PC-9 (cell line): ENCODE measurements at regions of chr2 and their contacts with region 1.

Region 1: DNA sequence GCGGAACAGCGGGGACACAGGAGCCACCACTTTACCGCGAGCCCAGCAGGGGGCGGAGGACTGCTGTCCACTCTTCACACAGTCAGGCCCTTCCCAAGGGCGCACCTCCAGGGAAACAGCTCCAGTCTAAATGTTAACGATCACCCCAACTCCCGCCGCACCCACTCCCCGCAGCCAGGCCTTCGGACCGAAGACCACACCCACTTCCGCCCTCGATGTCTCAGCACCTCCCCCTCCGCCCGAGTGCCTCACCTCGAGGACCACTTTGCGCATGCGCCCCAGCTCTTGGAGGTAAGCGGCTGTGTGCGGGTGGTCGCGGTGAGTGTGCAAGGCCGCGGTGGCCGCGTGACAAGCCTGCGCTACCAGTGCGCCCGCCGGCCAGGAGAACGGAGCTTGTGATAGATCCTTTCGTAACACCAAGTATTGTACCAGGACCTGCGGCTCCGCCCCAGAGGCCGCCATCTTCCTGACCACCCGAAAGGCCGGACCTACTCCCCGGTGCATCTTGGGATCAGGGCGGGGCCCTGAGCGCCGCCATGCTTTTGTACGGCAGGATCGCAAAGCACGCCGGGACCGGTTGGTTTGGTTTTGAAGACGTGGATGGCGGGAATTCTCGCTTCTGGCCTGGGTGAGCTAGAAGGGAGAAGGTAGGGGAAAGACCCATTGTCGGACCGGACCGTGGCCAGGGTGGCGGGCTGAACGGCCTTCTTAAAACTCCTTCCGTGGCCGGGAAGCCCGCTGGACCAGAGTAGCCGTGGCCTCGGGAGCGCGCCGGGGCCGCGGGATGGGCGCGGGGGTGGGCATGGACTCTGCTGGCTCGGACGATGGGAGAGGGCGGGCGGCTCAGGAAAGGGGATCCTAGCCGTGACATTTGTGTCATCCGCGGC is at the starts of genes CENPO and PTRHD1:
- DNase-seq: peak; percentile 93 to 96
- H3K4me3 ChIP-seq: peak within 1 kb of the TSS; percentile 71
- H3K27ac ChIP-seq: peak within 1 kb of the TSS; percentile 89
- H3K4me1 ChIP-seq: peaks cover 31% of the 10 kb centered on the region
- H3K27me3 ChIP-seq: no peaks in the 10 kb centered on the region
- CTCF ChIP-seq: peak; percentile 82
- total RNA-seq, gene CENPO: 21.3 and 33.0 TPM in 2 replicates
- total RNA-seq, gene PTRHD1: 23.6 and 28.7 TPM in 2 replicates

Region 2: GRCh38 chr2:24490674-24491625 is 302.2 kb before region 1 on chr2 and contains the start of gene NCOA1:
- CTCF ChIA-PET with region 1: no interaction called
- POLR2A ChIA-PET with region 1: no interaction called
- intact Hi-C with region 1: loop called (anchors 1 kb)
- DNase-seq: peak; percentile 66 to 86
- H3K4me3 ChIP-seq: peak within 1 kb of the TSS; percentile 74
- H3K27ac ChIP-seq: no peak within 1 kb of the TSS
- H3K4me1 ChIP-seq: peaks cover 25% of the 10 kb centered on the region
- H3K27me3 ChIP-seq: no peaks in the 10 kb centered on the region
- CTCF ChIP-seq: no peak
- total RNA-seq, gene NCOA1: 9.1 and 11.6 TPM in 2 replicates

Region 3: GRCh38 chr2:24613154-24613814 is 179.8 kb before region 1 on chr2:
- CTCF ChIA-PET with region 1: interaction called, 8 read pairs
- POLR2A ChIA-PET with region 1: no interaction called
- intact Hi-C with region 1: loop called (anchors 10 kb)
- DNase-seq: peak; percentile 7 to 42
- H3K4me3 ChIP-seq: no peak overlapping the region
- H3K27ac ChIP-seq: no peak overlapping the region
- H3K4me1 ChIP-seq: no peaks in the 10 kb centered on the region
- H3K27me3 ChIP-seq: no peaks in the 10 kb centered on the region
- CTCF ChIP-seq: peak; percentile 57

Region 4: GRCh38 chr2:24840962-24841945 is 48.1 kb after region 1 on chr2:
- CTCF ChIA-PET with region 1: no interaction called
- POLR2A ChIA-PET with region 1: no interaction called
- intact Hi-C with region 1: no loop called
- DNase-seq: no peak
- H3K4me3 ChIP-seq: no peak overlapping the region
- H3K27ac ChIP-seq: no peak overlapping the region
- H3K4me1 ChIP-seq: no peaks in the 10 kb centered on the region
- H3K27me3 ChIP-seq: no peaks in the 10 kb centered on the region
- CTCF ChIP-seq: no peak